WTC11 (cell line): ENCODE measurements at regions of chr6 and their contacts with region 1.

Region 1: DNA sequence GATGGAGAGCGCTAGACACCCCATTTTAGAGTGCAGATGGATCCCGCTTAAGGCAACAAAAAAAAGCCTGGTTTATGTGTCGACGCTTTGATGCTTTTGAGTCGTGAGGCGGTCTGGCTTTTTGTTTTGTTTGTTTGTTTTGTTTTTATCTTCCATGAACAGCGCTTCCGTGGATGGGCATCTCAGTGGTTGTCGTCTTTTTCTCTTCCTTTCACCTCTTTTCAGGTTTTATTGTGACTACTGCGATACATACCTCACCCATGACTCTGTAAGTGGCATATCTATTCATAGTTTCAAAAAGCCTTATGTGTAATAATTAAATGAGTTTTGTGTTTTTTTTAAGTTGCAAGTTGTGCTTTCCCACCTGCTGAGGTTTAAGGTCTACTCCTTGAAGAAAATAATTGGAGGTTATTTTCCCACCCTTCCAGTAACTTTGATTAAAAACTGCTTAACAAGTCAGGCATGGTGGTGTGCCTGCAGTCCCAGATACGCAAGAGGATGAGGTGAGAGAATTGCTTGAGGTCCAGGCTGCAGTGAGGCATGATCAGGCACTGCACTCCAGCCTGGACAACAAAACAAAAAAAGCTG is 476 bp downstream of the SNRPC start:
- DNase-seq: no peak
- ATAC-seq: no peak; the same call in 1 of the 2 replicates
- H3K4me3 Mint-ChIP-seq: no peak overlapping the region
- H3K27ac Mint-ChIP-seq: no peak overlapping the region
- H3K4me1 Mint-ChIP-seq: peaks cover 2% of the 10 kb centered on the region; the same call in 1 of the 2 replicates
- H3K27me3 Mint-ChIP-seq: no peaks in the 10 kb centered on the region
- CTCF ChIP-seq: no peak

Region 2: DNA sequence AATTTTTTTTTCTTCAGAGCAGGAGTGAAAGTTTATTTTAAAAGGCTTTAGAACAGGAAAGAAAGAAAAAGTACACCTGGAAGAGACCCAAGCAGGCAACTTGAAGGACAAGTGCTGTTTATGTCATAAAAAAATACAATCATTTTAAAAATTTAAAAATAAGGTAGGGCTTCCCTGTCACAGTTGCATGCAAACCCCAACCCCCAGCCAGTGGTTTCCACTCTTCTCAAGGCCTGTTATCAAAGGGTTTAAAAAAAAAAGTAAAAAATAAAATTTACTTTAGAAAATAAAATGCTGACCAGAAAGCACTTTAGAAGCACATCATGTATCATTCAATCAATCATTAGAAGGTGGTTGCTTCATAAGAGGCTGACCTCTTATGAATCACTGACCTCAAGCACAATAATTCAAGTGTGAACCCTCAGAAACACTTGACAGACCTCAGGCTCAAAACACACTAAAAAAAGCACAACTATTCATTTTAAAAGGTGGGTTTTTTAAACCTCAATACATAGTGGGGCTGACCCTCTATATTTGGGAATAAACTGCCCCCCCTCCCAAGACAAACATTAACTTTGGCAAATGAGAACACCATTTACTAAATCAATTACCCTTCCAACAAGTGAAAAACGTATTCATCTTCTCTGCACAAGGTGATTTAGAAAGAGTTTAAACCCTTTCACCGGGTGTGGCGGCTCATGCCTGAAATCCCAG is 76.8 kb before region 1 on chr6:
- CTCF ChIA-PET with region 1: no interaction called
- POLR2A ChIA-PET with region 1: no interaction called
- DNase-seq: no peak
- ATAC-seq: no peak
- H3K4me3 Mint-ChIP-seq: no peak overlapping the region
- H3K27ac Mint-ChIP-seq: no peak overlapping the region
- H3K4me1 Mint-ChIP-seq: no peaks in the 10 kb centered on the region; the same call in 1 of the 2 replicates
- H3K27me3 Mint-ChIP-seq: no peaks in the 10 kb centered on the region
- CTCF ChIP-seq: no peak

Region 3: GRCh38 chr6:34745277-34746103 is 12.3 kb before region 1 on chr6:
- CTCF ChIA-PET with region 1: interaction called, 10 read pairs
- POLR2A ChIA-PET with region 1: no interaction called
- DNase-seq: no peak
- ATAC-seq: no peak
- H3K4me3 Mint-ChIP-seq: no peak overlapping the region
- H3K27ac Mint-ChIP-seq: no peak overlapping the region
- H3K4me1 Mint-ChIP-seq: no peaks in the 10 kb centered on the region
- H3K27me3 Mint-ChIP-seq: no peaks in the 10 kb centered on the region
- CTCF ChIP-seq: no peak

Region 4: GRCh38 chr6:34773916-34774315 is 16.1 kb after region 1 on chr6:
- CTCF ChIA-PET with region 1: no interaction called
- POLR2A ChIA-PET with region 1: no interaction called
- DNase-seq: no peak
- ATAC-seq: no peak
- H3K4me3 Mint-ChIP-seq: no peak overlapping the region
- H3K27ac Mint-ChIP-seq: no peak overlapping the region
- H3K4me1 Mint-ChIP-seq: no peaks in the 10 kb centered on the region
- H3K27me3 Mint-ChIP-seq: no peaks in the 10 kb centered on the region
- CTCF ChIP-seq: no peak

Region 5: GRCh38 chr6:34819571-34820480 is 62.0 kb after region 1 on chr6:
- CTCF ChIA-PET with region 1: no interaction called
- POLR2A ChIA-PET with region 1: no interaction called
- DNase-seq: no peak
- ATAC-seq: no peak
- H3K4me3 Mint-ChIP-seq: no peak overlapping the region
- H3K27ac Mint-ChIP-seq: no peak overlapping the region; the same call in 1 of the 2 replicates
- H3K4me1 Mint-ChIP-seq: 0 out of 2 replicates have a peak, but pooled peaks cover 2% of the 10 kb centered on the region
- H3K27me3 Mint-ChIP-seq: no peaks in the 10 kb centered on the region
- CTCF ChIP-seq: no peak

Region 6: DNA sequence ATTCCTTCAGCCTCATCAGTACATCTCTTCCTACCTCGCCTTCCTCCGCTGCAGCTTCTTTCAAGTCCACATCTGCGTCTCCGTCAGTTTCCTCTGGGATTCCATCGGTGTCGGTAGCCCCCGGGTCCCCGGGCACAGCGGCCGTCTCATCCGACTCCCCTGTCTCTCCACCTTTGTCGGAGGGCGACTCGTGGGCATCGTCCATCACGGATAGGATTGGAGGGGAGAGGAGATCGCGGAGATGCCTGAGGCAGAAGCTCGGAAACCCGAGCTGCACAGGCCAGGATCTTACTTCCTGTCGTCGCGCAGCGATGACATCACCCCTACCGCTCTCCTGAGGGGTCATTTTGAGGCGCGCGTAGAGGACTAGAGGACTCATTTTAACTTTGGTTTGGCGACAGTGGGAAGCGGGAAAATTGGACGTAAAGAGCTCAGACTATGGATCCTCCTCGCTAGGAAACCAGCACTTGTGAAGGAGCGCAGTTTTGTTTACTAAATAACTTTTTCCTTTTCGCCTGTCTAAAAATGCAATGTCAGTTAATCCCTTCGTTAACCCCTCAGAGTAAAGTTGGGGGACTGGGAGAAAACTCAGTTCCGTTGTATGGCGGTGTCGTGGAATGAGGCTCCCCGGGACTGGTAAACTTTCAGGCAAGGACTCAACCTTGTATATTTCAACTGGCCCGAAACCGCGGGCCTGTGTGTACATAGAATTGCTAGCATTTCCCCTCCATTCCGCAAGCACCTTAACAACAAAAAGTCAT is 130.2 kb after region 1 on chr6 and contains the start of gene TAF11:
- CTCF ChIA-PET with region 1: interaction called, 3 read pairs
- POLR2A ChIA-PET with region 1: interaction called, 10 read pairs
- DNase-seq: peak; percentile 92
- ATAC-seq: peak; percentile 75
- H3K4me3 Mint-ChIP-seq: peak within 1 kb of the TSS; percentile 100
- H3K27ac Mint-ChIP-seq: peak within 1 kb of the TSS; percentile 100
- H3K4me1 Mint-ChIP-seq: peaks cover 14% of the 10 kb centered on the region
- H3K27me3 Mint-ChIP-seq: no peaks in the 10 kb centered on the region
- CTCF ChIP-seq: no peak
- total RNA-seq, gene TAF11: 40.8 to 44.1 TPM (median 42.2 TPM) in 3 replicates

Region 7: GRCh38 chr6:36204068-36204753 is 1446.4 kb after region 1 on chr6:
- CTCF ChIA-PET with region 1: no interaction called
- POLR2A ChIA-PET with region 1: no interaction called
- DNase-seq: no peak
- ATAC-seq: no peak
- H3K4me3 Mint-ChIP-seq: no peak overlapping the region
- H3K27ac Mint-ChIP-seq: no peak overlapping the region
- H3K4me1 Mint-ChIP-seq: no peaks in the 10 kb centered on the region
- H3K27me3 Mint-ChIP-seq: no peaks in the 10 kb centered on the region
- CTCF ChIP-seq: no peak